ENCODE measurements at regions of chr4 and their contacts with region 1.

Region 1: GRCh38 chr4:173168396-173169177 is at the start of gene GALNT7:
- DNase-seq: peak; percentile 86
- H3K4me3 Mint-ChIP-seq: peak within 1 kb of the TSS; percentile 96
- H3K27ac Mint-ChIP-seq: peak within 1 kb of the TSS; percentile 90
- H3K4me1 Mint-ChIP-seq: peaks cover 40% of the 10 kb centered on the region
- H3K27me3 Mint-ChIP-seq: no peaks in the 10 kb centered on the region
- total RNA-seq, gene GALNT7: 25.9 and 26.7 TPM in 2 replicates

Region 2: GRCh38 chr4:173135241-173135847 is 33.2 kb before region 1 on chr4:
- intact Hi-C with region 1: no loop called
- DNase-seq: no peak
- H3K4me3 Mint-ChIP-seq: no peak overlapping the region
- H3K27ac Mint-ChIP-seq: no peak overlapping the region
- H3K4me1 Mint-ChIP-seq: no peaks in the 10 kb centered on the region
- H3K27me3 Mint-ChIP-seq: peaks cover 14% of the 10 kb centered on the region

Region 3: DNA sequence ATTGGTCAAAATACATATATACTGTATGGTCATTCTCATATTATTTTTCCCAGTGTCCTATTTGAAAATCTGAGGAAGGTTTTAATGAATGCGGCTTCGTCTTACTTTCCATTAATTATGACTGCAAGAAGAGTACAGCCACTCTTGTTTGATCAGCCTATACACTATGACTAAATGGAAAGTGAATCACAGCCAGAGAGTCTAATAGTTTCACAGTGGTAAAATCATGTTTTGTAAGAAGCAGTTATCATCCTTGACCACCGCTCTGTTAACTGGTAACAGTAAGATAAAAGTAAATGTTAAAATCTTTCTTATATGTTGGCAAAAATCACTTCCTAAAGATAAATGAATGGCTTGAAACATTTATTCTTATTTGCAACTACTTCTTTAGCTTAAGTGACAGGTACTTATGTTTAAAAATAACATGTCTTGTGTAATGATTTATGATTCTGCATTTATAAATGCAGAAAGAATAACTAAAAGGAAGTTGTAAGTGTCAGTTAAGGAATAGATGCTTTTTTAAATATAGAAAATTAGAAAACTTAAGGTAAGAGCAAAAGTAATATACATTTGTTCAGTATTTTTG is 13.3 kb after region 1 on chr4:
- intact Hi-C with region 1: loop called (anchors 1 kb)
- DNase-seq: peak; percentile 34
- H3K4me3 Mint-ChIP-seq: no peak overlapping the region
- H3K27ac Mint-ChIP-seq: no peak overlapping the region
- H3K4me1 Mint-ChIP-seq: peaks cover 15% of the 10 kb centered on the region
- H3K27me3 Mint-ChIP-seq: no peaks in the 10 kb centered on the region

Region 4: GRCh38 chr4:173191623-173192041 is 23.0 kb after region 1 on chr4:
- intact Hi-C with region 1: loop called (anchors 2 kb)
- DNase-seq: no peak
- H3K4me3 Mint-ChIP-seq: peak overlapping the region; percentile 29
- H3K27ac Mint-ChIP-seq: peak overlapping the region; percentile 79
- H3K4me1 Mint-ChIP-seq: peaks cover 34% of the 10 kb centered on the region
- H3K27me3 Mint-ChIP-seq: no peaks in the 10 kb centered on the region

Region 5: GRCh38 chr4:173252024-173252935 is 83.7 kb after region 1 on chr4:
- intact Hi-C with region 1: loop called (anchors 5 kb)
- DNase-seq: no peak
- H3K4me3 Mint-ChIP-seq: no peak overlapping the region
- H3K27ac Mint-ChIP-seq: no peak overlapping the region
- H3K4me1 Mint-ChIP-seq: no peaks in the 10 kb centered on the region
- H3K27me3 Mint-ChIP-seq: no peaks in the 10 kb centered on the region

Region 6: DNA sequence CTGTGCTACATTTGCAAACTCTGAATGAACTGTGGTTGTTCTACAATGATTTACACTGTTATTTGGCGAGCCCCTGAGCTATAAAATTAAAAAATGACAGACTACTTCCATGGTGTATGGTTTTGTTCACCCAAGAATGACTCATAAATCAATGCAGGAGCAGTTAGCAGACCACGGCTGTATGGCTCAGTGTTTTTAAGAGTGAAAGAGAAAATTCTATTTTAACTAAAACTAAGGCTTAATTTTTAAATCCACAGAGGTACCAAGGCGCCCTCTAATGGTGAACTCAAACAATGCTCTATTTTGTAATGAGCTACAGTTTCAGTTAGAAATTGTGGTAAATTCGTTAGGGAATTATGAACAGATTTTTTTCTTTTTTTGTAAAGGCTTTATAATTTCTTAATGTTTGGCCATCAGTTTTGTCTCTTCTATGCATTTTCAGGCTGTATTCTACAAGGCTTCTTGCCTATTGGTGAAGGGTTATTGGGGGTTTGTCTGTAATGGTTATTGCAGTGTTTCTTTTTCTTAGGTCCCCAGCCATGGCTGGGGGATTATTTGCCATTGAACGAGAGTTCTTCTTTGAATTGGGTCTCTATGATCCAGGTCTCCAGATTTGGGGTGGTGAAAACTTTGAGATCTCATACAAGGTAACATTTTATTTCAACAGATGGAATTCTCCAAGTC is 133.1 kb after region 1 on chr4:
- intact Hi-C with region 1: no loop called
- DNase-seq: peak; percentile 73
- H3K4me3 Mint-ChIP-seq: no peak overlapping the region
- H3K27ac Mint-ChIP-seq: no peak overlapping the region
- H3K4me1 Mint-ChIP-seq: no peaks in the 10 kb centered on the region
- H3K27me3 Mint-ChIP-seq: no peaks in the 10 kb centered on the region

Region 7: DNA sequence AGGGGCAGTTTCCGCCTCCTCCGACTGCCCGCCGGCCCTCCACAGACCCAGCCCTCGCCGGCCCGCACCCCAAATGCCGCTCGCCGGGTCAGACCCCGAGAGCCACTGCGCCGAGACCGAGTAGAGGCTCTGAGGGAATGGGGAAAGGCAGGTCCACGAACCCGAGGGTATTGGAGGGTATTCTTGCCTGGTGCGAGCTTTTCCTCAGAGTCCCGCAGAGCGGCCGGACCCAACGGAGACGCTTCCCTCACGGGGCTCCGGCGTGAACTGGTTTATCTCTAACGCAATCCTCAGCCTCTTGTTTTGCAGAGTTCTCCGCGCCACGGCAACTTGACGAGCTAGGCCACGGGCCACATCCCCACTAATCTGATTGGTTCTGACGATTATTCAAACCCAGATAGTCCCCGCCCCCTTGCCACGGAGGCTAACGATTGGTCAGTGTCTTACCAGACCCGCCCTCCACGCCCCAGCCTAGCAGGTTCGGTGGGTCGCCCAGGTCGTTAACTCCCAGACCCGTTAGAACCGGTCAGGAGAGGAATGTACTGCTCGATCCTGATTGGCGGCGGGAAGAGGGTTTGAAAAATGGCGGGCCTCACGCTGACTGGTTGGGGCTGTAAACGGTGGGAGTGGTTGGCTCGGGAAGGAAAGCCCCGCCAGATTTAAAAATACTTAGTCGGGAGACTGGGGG is 165.6 kb after region 1 on chr4 and contains the start of gene HMGB2:
- intact Hi-C with region 1: loop called (anchors 1 kb)
- DNase-seq: peak; percentile 100
- H3K4me3 Mint-ChIP-seq: peak within 1 kb of the TSS; percentile 97
- H3K27ac Mint-ChIP-seq: peak within 1 kb of the TSS; percentile 100
- H3K4me1 Mint-ChIP-seq: peaks cover 47% of the 10 kb centered on the region
- H3K27me3 Mint-ChIP-seq: no peaks in the 10 kb centered on the region
- total RNA-seq, gene HMGB2: 311 and 315 TPM in 2 replicates